ENCODE measurements at regions of chr18 and their contacts with region 1.

Region 1: DNA sequence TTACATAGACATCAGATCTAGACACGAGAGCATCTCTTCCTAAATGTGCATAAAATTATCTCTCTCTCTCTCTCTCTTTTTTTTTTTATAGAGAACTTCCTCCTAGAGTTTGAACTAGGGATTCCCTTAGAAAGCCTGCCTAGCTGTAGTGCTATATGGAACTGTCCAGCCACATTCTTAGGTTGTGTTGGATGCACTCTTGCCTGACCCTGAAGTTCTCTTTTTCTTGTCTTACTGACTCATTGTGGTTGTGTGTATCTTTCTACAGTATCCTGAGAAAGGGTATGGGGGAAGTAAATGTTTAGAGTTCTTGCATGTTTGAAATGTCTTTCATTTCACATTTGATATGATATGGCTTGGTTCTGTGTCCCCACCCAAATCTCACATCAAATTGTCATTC is 368.2 kb downstream of the CDH2 start:
- H3K4me3 Mint-ChIP-seq: no peak overlapping the region
- H3K27ac Mint-ChIP-seq: no peak overlapping the region
- H3K4me1 Mint-ChIP-seq: no peaks in the 10 kb centered on the region
- H3K27me3 Mint-ChIP-seq: no peaks in the 10 kb centered on the region

Region 2: DNA sequence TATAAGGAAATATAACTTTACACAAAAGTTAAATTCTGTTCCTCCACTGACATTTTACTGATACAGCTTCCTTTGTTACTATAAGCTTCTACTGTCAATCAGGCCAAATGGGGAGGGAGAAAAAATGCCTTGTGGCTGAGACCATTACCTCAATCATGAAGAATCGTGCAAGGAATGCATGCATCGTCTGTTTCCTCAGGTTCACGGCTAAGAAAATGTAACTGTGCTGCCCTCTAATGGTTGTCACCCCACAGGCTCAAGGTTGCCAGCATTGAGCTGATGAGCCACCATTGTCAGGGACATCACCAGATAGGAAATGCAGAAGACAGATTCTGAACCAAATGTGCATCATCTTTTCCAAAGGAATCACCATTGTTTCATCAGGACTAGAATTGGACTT is 58.7 kb before region 1 on chr18:
- intact Hi-C with region 1: loop called (anchors 10 kb)
- H3K4me3 Mint-ChIP-seq: no peak overlapping the region
- H3K27ac Mint-ChIP-seq: no peak overlapping the region
- H3K4me1 Mint-ChIP-seq: no peaks in the 10 kb centered on the region
- H3K27me3 Mint-ChIP-seq: no peaks in the 10 kb centered on the region

Region 3: DNA sequence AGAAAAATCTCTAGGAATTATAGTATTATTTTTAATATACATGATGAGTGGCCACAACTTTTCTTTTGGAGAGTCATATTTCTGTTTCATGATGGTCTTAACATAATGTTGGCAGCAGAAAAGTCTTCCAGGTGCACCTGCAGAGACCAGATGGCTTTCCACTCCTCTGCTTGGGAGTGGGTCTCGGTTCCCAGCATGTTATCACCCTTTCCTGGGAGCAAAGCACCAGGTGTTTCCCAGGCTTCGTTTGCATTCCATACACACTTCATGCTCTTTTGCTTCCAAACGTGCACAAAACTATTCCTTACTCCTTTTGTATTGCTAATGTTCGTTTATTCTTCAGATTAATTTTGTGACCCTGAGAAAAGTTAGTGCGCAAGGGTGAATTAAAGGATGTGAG is 63.0 kb after region 1 on chr18:
- intact Hi-C with region 1: loop called (anchors 10 kb)
- H3K4me3 Mint-ChIP-seq: no peak overlapping the region
- H3K27ac Mint-ChIP-seq: no peak overlapping the region
- H3K4me1 Mint-ChIP-seq: no peaks in the 10 kb centered on the region
- H3K27me3 Mint-ChIP-seq: no peaks in the 10 kb centered on the region

Region 4: GRCh38 chr18:29248805-29249204 is 1440.1 kb after region 1 on chr18:
- intact Hi-C with region 1: no loop called
- H3K4me3 Mint-ChIP-seq: no peak overlapping the region
- H3K27ac Mint-ChIP-seq: no peak overlapping the region
- H3K4me1 Mint-ChIP-seq: no peaks in the 10 kb centered on the region
- H3K27me3 Mint-ChIP-seq: no peaks in the 10 kb centered on the region

Region 5: GRCh38 chr18:29301048-29301447 is 1492.4 kb after region 1 on chr18:
- intact Hi-C with region 1: no loop called
- H3K4me3 Mint-ChIP-seq: no peak overlapping the region
- H3K27ac Mint-ChIP-seq: no peak overlapping the region
- H3K4me1 Mint-ChIP-seq: no peaks in the 10 kb centered on the region
- H3K27me3 Mint-ChIP-seq: no peaks in the 10 kb centered on the region